ENCODE measurements at regions of chr11 and their contacts with region 1.

Region 1: GRCh38 chr11:125091247-125091876 is 20.1 kb downstream of the TMEM218 start:
- DNase-seq: peak; percentile 81
- H3K4me3 ChIP-seq: no peak overlapping the region
- H3K27ac ChIP-seq: peak overlapping the region; percentile 4
- H3K4me1 ChIP-seq: peaks cover 11% of the 10 kb centered on the region
- H3K27me3 ChIP-seq: no peaks in the 10 kb centered on the region
- CTCF ChIP-seq: peak; percentile 56 to 66
- POLR2A ChIP-seq: no peak

Region 2: DNA sequence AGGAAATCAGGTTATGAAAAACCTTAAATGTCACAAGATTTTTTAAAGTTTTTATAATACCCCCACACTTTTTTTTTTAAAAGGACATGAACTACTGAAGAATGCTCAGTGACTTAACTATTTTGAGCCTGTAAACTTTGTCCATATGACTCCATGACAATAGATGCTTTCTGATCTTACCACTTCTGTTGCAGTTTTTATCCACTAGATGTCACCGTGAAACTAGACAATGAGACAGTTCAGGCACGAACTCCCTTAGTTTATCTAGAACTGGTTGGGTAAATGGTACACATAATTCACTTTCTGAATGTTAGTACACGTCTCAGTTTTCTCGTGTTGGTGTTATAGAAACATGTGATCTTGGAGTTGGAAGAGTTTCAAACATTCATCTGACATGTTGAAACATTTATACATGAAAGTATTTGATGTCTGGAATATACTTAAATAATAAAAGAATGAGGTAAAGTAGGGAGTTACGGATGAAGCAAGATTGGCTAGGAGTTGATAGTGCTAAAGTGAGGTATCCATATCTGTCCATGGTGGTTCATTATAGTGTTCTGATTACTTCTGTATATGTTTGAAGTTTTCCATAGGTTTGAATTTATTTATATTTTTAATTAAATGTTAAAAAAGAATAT is 129.3 kb before region 1 on chr11:
- CTCF ChIA-PET with region 1: interaction called, 6 read pairs
- POLR2A ChIA-PET with region 1: no interaction called
- dilution Hi-C with region 1: no loop called
- intact Hi-C with region 1: loop called (anchors 1 kb)
- DNase-seq: peak; percentile 86
- H3K4me3 ChIP-seq: no peak overlapping the region
- H3K27ac ChIP-seq: no peak overlapping the region
- H3K4me1 ChIP-seq: no peaks in the 10 kb centered on the region
- H3K27me3 ChIP-seq: no peaks in the 10 kb centered on the region
- CTCF ChIP-seq: peak; percentile 50 to 60
- POLR2A ChIP-seq: no peak

Region 3: DNA sequence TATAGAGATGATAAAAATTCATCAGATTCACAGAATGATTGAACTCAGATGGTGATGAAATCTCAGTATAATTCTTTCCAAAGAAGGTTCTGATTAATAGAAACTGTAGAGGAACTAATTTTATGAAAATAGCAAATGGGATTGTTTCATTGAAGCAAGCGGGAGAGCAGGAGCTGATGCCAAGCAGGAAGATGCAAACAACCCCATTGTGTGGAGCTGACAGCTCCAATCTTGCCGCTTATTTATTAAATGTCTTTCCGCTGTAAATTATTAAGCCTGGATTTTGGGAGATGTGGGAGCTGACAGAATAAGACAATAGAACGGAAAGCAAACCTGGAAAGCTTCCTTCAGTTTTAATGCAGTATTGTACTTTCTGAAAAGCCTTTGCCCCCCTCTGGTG is 26.1 kb after region 1 on chr11:
- CTCF ChIA-PET with region 1: interaction called, 17 read pairs
- POLR2A ChIA-PET with region 1: no interaction called
- dilution Hi-C with region 1: no loop called
- intact Hi-C with region 1: no loop called
- DNase-seq: peak; percentile 3
- H3K4me3 ChIP-seq: no peak overlapping the region
- H3K27ac ChIP-seq: no peak overlapping the region
- H3K4me1 ChIP-seq: no peaks in the 10 kb centered on the region
- H3K27me3 ChIP-seq: peaks cover 5 to 8% of the 10 kb centered on the region in 2 experiments
- CTCF ChIP-seq: no peak
- POLR2A ChIP-seq: no peak

Region 4: DNA sequence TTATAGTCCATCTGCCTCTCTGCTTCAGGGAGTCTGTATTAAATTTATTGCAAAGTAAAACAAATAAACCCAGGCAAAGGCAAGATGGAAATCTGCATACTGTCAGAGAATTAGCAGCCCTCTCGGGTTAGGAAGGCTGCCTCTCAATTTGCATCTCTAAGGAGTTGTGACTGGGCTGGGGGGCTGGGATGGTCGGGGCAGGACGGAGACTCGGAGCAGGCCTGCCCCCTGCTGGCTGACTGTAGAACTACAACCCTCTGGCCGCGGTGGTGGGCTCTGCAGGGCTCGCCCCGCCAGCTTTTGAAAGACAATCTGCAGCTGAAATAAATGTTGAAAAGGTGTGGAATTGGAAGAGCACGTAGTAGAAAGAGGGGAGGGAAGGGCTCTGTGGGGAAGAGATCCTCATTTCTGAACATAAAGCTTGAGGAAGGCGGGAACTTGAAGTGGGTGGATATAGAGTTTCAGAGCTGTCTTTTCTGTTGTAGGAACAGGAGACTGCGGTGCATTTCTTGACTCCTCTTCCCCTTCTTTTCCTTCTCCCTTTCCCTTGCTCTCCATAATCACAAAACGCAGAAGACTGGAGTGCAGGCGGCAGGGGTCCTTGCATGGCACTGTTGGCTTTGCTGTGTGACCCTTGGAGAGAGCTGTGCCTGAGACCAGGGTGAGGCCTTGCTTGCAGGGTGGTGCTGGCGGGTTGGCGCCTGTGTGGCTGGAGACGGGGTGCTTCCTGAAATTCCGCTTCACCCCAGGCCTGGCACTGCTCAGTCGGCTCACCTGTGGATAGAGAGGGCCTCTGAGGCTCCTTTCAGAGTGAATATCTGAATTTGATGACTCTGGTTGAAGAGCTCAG is 50.5 kb after region 1 on chr11:
- CTCF ChIA-PET with region 1: interaction called, 141 read pairs
- POLR2A ChIA-PET with region 1: no interaction called
- dilution Hi-C with region 1: no loop called
- intact Hi-C with region 1: loop called (anchors 1 kb)
- DNase-seq: peak; percentile 52
- H3K4me3 ChIP-seq: no peak overlapping the region
- H3K27ac ChIP-seq: no peak overlapping the region
- H3K4me1 ChIP-seq: no peaks in the 10 kb centered on the region
- H3K27me3 ChIP-seq: peaks cover 0 to 10% of the 10 kb centered on the region in 2 experiments
- CTCF ChIP-seq: peak; percentile 90 to 95
- POLR2A ChIP-seq: no peak

Region 5: DNA sequence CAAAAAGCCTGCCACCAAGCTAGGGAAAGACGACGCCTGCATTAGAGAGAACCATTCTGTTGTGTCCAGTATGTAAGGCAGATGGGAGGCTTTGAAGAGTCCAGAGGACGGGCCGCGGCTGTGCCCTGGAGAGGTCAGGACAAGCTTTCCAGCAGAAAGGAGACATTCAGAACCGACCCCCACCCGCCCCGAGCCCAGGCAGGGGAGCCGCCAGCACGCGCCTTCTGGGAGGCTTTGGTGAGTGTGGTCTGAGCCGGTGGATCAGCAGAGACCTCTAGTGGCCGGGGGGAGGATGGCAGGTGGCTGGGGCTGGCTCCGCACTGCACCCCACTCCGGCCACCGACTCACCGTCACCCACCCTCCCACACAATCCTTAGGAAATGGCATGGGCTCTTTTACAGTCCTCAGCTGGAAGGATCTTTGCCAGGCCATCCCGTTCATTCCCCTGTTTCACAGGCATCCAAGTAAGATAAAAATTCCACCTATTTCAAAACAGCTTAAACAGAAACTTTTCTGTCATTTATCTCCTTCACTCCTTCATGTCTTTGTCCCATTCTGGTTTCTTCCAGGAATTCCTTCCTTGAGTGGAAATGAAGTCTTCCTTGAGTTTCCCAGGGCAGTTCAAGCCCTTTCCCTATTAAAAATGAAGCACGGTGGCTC is 313.5 kb after region 1 on chr11:
- CTCF ChIA-PET with region 1: interaction called, 31 read pairs
- POLR2A ChIA-PET with region 1: no interaction called
- dilution Hi-C with region 1: no loop called
- intact Hi-C with region 1: loop called (anchors 1 kb)
- DNase-seq: peak; percentile 47
- H3K4me3 ChIP-seq: no peak overlapping the region
- H3K27ac ChIP-seq: no peak overlapping the region
- H3K4me1 ChIP-seq: peaks cover 4% of the 10 kb centered on the region
- H3K27me3 ChIP-seq: peaks cover 9 to 12% of the 10 kb centered on the region in 2 experiments
- CTCF ChIP-seq: peak; percentile 79 to 99
- POLR2A ChIP-seq: no peak

Region 6: GRCh38 chr11:125874556-125875124 is 783.3 kb after region 1 on chr11:
- CTCF ChIA-PET with region 1: no interaction called
- POLR2A ChIA-PET with region 1: no interaction called
- dilution Hi-C with region 1: no loop called
- intact Hi-C with region 1: loop called (anchors 10 kb)
- DNase-seq: peak; percentile 66
- H3K4me3 ChIP-seq: no peak overlapping the region
- H3K27ac ChIP-seq: no peak overlapping the region
- H3K4me1 ChIP-seq: no peaks in the 10 kb centered on the region
- H3K27me3 ChIP-seq: no peaks in the 10 kb centered on the region
- CTCF ChIP-seq: peak; percentile 70 to 77
- POLR2A ChIP-seq: no peak